ENCODE measurements at regions of chr9 and their contacts with region 1.

Region 1: DNA sequence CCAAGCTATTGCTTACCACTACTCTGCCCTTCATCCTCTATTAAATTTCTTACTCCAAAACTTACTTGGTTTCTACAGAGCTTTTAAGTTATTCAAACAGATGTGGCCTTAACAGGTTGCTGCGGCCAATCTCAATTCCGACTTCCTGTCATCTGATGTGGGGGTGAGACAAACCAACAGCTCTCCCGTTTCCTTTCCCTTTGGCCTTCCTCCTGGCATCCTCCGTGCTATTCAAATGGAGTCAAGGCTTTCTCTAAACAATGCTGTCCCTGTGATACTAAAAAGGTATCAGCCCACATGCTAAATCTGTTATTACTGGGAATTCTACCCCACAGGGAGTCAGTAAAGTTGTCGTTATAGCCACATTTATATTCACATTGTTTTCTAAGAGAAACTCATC is 11.8 kb downstream of the RBM18 start:
- DNase-seq: no peak
- ATAC-seq: peak; percentile 37

Region 2: DNA sequence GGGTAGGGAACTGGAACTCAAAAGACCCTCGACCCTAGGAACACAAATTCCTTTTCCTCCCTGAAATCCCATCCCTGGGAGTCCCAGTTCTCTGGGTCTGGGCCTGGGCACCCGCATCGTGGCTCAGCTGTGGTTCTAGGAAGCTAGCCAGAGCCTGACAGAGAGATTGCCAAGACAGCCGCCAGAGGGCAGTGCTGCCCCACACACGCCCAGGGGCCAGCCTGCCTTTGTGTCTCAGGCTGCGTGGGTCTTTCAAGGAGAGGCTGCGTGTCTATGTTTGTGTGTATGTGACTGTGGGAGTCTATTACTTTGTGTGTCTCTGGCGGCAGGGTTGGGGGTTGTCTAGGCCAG is 127.7 kb before region 1 on chr9:
- intact Hi-C with region 1: no loop called
- DNase-seq: peak; percentile 85
- ATAC-seq: peak; percentile 82

Region 3: GRCh38 chr9:122307925-122308324 is 55.1 kb after region 1 on chr9:
- intact Hi-C with region 1: loop called (anchors 5 kb)
- DNase-seq: no peak
- ATAC-seq: peak; percentile 16

Measured in Right ventricle myocardium inferior (tissue), 1 donor.